ENCODE measurements at regions of chr4 and their contacts with region 1.

Region 1: DNA sequence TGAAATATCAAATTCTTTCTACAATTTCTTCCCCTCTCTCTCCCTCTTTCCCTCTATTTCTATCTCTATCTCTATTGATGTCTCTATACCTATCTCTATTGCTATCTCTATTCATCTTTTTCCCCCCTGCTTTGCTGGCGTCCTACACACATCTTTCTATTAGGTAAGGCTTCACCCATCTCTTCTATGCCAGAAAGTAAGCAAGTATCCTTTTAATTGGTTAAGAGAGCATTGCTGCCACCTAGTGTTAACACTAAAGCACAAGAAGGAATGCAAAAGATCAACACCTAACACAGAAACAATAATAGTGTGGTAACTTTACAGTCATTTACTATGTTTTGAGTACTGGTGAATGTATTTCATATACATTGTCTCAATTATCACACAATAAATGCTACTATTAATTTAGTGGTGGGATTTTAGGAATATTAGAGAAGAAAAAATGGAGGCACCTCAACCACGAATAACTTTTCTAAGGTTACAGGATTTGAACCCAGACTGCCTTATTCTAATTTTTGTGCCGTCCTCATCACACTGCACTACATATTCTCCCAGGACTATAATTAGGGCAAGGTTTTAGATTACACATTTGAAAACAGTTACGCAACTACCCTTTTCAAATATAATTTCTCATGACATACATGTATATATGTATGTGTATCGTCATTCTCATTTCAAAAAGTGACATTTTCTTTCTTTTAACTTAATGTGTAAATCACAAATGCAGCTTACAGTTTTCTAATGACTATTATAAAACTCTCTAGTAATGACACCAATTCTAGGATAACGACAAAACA is 3.7 kb upstream of the C4orf36 start:
- DNase-seq: peak; percentile 67
- H3K4me3 ChIP-seq: no peak overlapping the region
- H3K27ac ChIP-seq: no peak overlapping the region
- H3K4me1 ChIP-seq: peaks cover 15% of the 10 kb centered on the region
- H3K27me3 ChIP-seq: no peaks in the 10 kb centered on the region
- CTCF ChIP-seq: peak; percentile 61 to 72

Region 2: DNA sequence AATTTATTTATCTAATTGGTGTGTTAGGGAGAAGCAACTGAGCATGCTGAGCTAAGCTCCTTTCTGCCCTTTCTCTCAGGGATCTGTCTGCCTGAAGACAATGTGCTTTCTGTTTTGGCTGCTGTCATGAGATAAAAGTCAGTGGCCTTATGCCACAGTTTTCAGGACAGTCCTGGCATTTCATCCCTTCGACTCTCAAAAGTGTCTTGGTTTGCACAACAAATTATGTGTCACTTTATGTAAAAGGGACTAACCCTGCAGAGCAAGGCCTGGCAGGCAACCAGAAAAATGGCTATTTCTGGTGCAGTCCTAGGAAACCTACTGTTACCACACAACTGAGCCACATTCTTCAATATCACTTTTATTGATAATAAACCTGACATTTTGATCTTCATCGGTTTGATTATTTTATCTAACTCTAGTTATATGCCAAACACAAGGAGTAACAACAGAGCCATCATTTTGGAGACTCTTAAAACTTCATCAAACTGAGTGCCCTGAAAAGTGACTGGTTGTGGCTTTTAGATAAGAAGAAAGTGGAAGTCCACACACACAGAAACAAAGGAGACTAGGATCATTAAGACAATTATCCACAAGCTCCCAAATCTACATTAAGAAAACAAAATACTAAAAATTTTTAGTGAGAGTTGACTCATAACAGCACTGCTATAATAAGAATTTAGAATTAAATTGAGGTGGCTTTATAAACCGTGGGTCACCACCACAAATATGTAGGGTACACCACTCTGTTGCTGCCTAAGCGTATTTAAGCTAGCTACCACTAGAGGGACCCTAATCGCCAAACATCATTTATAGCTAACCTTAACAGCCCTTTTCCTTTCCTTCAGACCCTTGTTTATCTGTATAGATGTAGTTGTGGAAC is 397.7 kb before region 1 on chr4:
- CTCF ChIA-PET with region 1: no interaction called
- dilution Hi-C with region 1: no loop called
- in situ Hi-C with region 1: loop called (anchors 5 kb)
- intact Hi-C with region 1: loop called (anchors 1 kb)
- DNase-seq: peak; percentile 40
- H3K4me3 ChIP-seq: no peak overlapping the region
- H3K27ac ChIP-seq: no peak overlapping the region
- H3K4me1 ChIP-seq: peaks cover 26% of the 10 kb centered on the region
- H3K27me3 ChIP-seq: no peaks in the 10 kb centered on the region
- CTCF ChIP-seq: peak; percentile 78 to 89

Region 3: DNA sequence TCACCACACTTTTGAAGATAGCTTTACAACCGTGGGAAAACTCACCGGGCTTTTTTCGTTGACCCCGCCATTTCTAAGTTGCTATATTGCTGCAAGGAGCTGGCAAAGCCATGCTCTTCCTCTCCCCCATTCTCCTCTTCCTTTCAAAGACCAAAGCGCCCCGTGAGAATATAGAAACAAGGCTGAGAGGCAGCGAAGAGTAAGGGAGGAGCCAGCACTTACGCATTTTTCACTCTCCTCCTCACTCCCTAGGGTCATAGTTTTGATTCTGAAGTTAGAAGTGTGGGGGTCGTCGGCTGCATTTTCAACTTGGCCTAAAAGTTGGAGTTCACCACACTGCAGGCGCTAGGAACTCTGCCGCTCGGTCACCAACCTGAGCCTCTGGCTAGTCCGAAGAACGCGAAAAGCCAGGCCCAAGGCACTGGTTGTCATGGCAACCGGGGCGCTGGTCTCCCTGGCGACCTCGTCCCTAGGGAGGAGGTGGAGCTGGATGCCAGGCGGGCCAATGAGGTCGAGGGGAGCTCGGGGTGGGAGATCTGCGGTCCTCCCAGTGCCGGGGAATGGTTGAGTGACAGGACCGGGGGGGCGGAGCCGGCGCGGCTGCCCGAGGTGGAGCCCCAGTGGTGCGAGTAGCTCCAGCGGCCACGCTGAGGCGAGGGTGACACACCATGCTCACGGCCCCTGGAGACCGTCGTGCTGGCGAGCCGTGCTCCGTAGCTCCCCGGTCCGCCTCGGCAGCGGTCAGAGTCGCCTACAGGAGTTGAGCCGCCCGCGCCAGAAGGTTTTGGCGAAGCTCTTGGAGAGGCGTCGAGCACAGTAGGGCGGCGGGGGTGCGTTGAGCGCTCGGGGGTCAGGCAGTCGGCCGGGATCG is 302.0 kb before region 1 on chr4 and contains the start of gene PTPN13:
- CTCF ChIA-PET with region 1: no interaction called
- dilution Hi-C with region 1: no loop called
- in situ Hi-C with region 1: loop called in 1 of 2 experiments (anchors 10 kb)
- intact Hi-C with region 1: loop called (anchors 1 kb)
- DNase-seq: peak; percentile 99
- H3K4me3 ChIP-seq: peak within 1 kb of the TSS; percentile 85 to 94 (median 91)
- H3K27ac ChIP-seq: peak within 1 kb of the TSS; percentile 93
- H3K4me1 ChIP-seq: peaks cover 33% of the 10 kb centered on the region
- H3K27me3 ChIP-seq: no peaks in the 10 kb centered on the region
- CTCF ChIP-seq: peak in 1 of 2 donors; percentile 7
- total RNA-seq, gene PTPN13: 60.3 to 60.6 TPM

Region 4: GRCh38 chr4:86778175-86778574 is 117.7 kb before region 1 on chr4:
- CTCF ChIA-PET with region 1: no interaction called
- dilution Hi-C with region 1: no loop called
- in situ Hi-C with region 1: no loop called
- intact Hi-C with region 1: loop called (anchors 5 kb)
- DNase-seq: no peak
- H3K4me3 ChIP-seq: no peak overlapping the region
- H3K27ac ChIP-seq: no peak overlapping the region
- H3K4me1 ChIP-seq: no peaks in the 10 kb centered on the region
- H3K27me3 ChIP-seq: no peaks in the 10 kb centered on the region
- CTCF ChIP-seq: no peak

Region 5: DNA sequence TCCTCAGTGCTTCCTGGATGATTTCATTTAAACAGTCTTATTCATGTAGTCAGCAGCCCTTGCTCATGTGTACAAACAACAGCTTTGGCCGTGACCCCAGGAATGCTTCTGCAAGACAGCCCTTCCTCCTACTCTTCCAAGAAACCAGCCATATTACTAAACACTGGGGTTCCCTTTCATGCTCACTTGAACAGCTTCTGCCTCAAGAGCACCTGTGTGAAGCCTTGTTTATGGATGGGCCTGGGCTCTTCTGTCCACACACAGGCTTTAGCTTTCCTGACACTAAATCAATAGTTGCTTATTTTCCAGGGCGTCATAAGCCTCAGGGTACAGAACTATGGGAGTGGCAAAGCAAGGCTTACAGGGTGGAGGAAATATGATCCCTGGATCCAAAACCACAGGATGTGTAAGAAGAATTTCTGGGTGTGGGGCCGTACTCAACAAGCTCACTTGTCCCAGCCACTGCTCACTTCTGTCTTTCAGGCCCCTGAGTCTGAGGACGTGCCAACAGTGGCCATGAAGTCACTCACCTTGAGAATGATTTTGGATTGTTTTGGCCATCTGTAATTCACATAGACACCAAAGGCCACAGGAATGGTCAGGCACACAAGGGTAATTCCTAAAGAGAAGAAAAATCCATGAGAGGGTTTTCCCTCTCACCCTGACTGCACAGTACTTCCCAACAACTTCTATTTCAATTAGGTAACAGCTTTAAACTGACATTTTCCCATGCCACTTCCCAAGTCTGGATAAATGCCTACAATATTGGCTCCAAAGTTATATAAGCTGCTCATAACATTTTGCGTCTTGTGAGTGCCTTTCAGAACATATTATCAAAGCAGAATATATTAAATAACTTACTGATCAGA is 64.4 kb before region 1 on chr4:
- CTCF ChIA-PET with region 1: no interaction called
- dilution Hi-C with region 1: no loop called
- in situ Hi-C with region 1: loop called (anchors 5 to 10 kb)
- intact Hi-C with region 1: loop called (anchors 1 kb)
- DNase-seq: peak; percentile 97
- H3K4me3 ChIP-seq: no peak overlapping the region
- H3K27ac ChIP-seq: peak overlapping the region; percentile 94
- H3K4me1 ChIP-seq: peaks cover 32% of the 10 kb centered on the region
- H3K27me3 ChIP-seq: no peaks in the 10 kb centered on the region
- CTCF ChIP-seq: no peak

Region 6: GRCh38 chr4:86908251-86908657 is 12.4 kb after region 1 on chr4:
- CTCF ChIA-PET with region 1: interaction called, 12 read pairs
- dilution Hi-C with region 1: no loop called
- in situ Hi-C with region 1: no loop called
- intact Hi-C with region 1: no loop called
- DNase-seq: no peak
- H3K4me3 ChIP-seq: no peak overlapping the region
- H3K27ac ChIP-seq: no peak overlapping the region
- H3K4me1 ChIP-seq: peaks cover 4% of the 10 kb centered on the region
- H3K27me3 ChIP-seq: no peaks in the 10 kb centered on the region
- CTCF ChIP-seq: no peak

Region 7: GRCh38 chr4:87209696-87210095 is 313.8 kb after region 1 on chr4:
- CTCF ChIA-PET with region 1: no interaction called
- dilution Hi-C with region 1: no loop called
- in situ Hi-C with region 1: no loop called
- intact Hi-C with region 1: no loop called
- DNase-seq: no peak
- H3K4me3 ChIP-seq: no peak overlapping the region
- H3K27ac ChIP-seq: no peak overlapping the region
- H3K4me1 ChIP-seq: no peaks in the 10 kb centered on the region
- H3K27me3 ChIP-seq: no peaks in the 10 kb centered on the region
- CTCF ChIP-seq: no peak

Region 8: GRCh38 chr4:87235020-87235671 is 339.3 kb after region 1 on chr4:
- CTCF ChIA-PET with region 1: no interaction called
- dilution Hi-C with region 1: no loop called
- in situ Hi-C with region 1: loop called (anchors 10 to 25 kb)
- intact Hi-C with region 1: loop called (anchors 1 kb)
- DNase-seq: peak; percentile 32
- H3K4me3 ChIP-seq: peak overlapping the region in 2 of 3 experiments; percentile 55 to 58
- H3K27ac ChIP-seq: peak overlapping the region; percentile 37
- H3K4me1 ChIP-seq: peaks cover 6% of the 10 kb centered on the region
- H3K27me3 ChIP-seq: no peaks in the 10 kb centered on the region
- CTCF ChIP-seq: no peak

Measured in mammary epithelial cell (primary cell).